ENCODE measurements at regions of chr7 and their contacts with region 1.

Region 1: GRCh38 chr7:99143853-99144672 is at the start of gene SMURF1:
- DNase-seq: peak; percentile 70
- H3K4me3 ChIP-seq: peak within 1 kb of the TSS; percentile 72 to 95 (median 80)
- H3K27ac ChIP-seq: peak within 1 kb of the TSS; percentile 79
- H3K4me1 ChIP-seq: peaks cover 19% of the 10 kb centered on the region
- H3K27me3 ChIP-seq: no peaks in the 10 kb centered on the region
- CTCF ChIP-seq: no peak
- POLR2A ChIP-seq: peak; percentile 85
- total RNA-seq, gene SMURF1: 22.3 and 22.8 TPM in 2 replicates

Region 2: GRCh38 chr7:98448766-98449165 is 695.3 kb before region 1 on chr7:
- CTCF ChIA-PET with region 1: no interaction called
- POLR2A ChIA-PET with region 1: no interaction called
- dilution Hi-C with region 1: no loop called
- intact Hi-C with region 1: no loop called
- DNase-seq: no peak
- H3K4me3 ChIP-seq: no peak overlapping the region
- H3K27ac ChIP-seq: no peak overlapping the region
- H3K4me1 ChIP-seq: no peaks in the 10 kb centered on the region
- H3K27me3 ChIP-seq: no peaks in the 10 kb centered on the region
- CTCF ChIP-seq: no peak
- POLR2A ChIP-seq: no peak

Region 3: DNA sequence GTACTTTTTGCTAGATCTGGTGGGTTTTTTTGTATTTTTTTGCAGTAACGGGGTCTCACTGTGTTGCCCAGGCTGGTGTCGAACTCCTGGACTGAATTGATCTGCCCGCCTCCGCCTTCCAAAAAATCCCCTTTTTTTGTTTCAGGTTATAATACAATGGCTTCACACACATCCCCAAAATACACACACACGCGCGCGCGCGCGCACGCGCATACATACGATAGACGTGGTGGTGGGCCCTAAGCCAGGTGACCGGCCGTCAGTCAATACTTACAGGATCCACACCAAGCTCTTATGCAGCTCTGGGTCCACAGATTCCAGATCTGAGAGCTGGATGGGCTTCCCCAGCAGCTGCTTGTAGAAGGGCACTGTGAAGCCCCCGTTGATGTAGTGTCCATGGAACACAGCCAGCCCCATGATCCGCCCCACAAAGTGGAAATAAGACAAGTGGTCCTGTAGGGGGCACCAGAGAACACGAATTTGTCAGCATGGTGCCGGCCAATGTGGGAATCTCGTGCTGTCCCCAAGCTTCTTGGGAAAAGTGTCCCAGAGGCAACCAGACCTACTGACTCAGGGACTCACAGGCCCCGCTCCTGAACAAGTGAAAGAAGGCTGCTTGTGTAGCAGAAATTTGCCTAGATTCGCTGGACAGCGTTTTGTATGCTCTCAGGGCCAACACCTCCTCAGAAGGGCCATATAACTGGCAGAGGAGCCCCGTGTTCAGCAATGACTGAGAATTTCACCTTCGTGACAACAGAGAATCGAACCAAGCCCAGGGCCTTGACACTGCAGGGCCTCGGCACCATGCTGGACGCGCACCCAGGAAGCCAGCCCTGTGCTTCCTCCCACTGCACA is 103.7 kb before region 1 on chr7:
- CTCF ChIA-PET with region 1: interaction called, 4 read pairs
- POLR2A ChIA-PET with region 1: no interaction called
- dilution Hi-C with region 1: no loop called
- intact Hi-C with region 1: loop called (anchors 1 kb)
- DNase-seq: peak; percentile 89
- H3K4me3 ChIP-seq: no peak overlapping the region
- H3K27ac ChIP-seq: peak overlapping the region; percentile 61
- H3K4me1 ChIP-seq: peaks cover 37% of the 10 kb centered on the region
- H3K27me3 ChIP-seq: no peaks in the 10 kb centered on the region
- CTCF ChIP-seq: peak; percentile 74
- POLR2A ChIP-seq: no peak

Region 4: DNA sequence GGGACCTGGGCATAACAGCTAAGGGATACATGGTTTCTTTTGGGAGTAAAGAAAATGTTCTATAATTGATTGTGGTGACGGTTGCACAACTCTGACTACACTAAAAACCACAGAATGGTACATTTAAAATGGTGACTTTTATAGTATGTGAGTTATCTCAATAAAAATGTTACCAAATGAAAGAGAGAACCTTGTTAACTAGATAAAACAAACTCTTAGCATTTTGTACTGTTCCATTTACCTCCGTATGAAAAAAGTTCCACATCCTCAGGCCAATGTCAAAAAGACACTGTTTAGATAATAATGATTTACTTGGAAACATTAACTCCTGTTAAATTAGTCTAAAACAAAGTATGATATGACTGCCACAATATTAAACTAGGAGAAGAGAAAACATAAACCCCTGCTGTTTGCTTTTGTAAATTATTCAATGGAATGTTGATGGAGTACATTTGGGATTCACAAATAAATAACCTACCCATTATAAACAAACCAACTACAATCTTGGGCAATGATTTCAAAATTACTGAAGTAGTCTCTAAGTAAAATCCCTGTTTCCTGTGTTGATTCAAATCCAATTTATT is 60.9 kb before region 1 on chr7:
- CTCF ChIA-PET with region 1: no interaction called
- POLR2A ChIA-PET with region 1: no interaction called
- dilution Hi-C with region 1: no loop called
- intact Hi-C with region 1: loop called (anchors 5 kb)
- DNase-seq: no peak
- H3K4me3 ChIP-seq: no peak overlapping the region
- H3K27ac ChIP-seq: no peak overlapping the region
- H3K4me1 ChIP-seq: peaks cover 5% of the 10 kb centered on the region
- H3K27me3 ChIP-seq: no peaks in the 10 kb centered on the region
- CTCF ChIP-seq: no peak
- POLR2A ChIP-seq: no peak

Region 5: GRCh38 chr7:99098824-99099498 is 45.1 kb before region 1 on chr7:
- CTCF ChIA-PET with region 1: no interaction called
- POLR2A ChIA-PET with region 1: no interaction called
- dilution Hi-C with region 1: no loop called
- intact Hi-C with region 1: loop called (anchors 2 kb)
- DNase-seq: no peak
- H3K4me3 ChIP-seq: no peak overlapping the region
- H3K27ac ChIP-seq: no peak overlapping the region
- H3K4me1 ChIP-seq: peaks cover 19% of the 10 kb centered on the region
- H3K27me3 ChIP-seq: no peaks in the 10 kb centered on the region
- CTCF ChIP-seq: no peak
- POLR2A ChIP-seq: no peak

Region 6: DNA sequence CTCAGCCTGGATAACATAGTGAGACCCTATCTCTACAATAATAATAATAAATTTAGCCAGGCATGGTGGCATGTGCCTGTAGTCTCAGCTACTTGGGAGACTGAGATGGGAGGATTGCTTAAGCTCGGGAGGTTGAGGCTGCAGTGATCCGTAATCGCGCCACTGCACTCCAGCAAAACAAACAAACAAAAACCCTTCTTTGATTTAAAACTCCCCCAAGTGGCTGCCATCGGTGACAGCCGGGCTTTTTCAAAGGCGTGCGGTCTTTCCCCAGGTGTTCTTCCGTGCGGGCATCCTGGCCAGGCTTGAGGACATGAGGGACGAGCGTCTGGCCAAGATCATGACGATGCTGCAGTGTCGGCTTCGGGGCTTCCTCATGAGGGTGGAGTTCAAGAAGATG is 126.6 kb after region 1 on chr7:
- CTCF ChIA-PET with region 1: interaction called, 3 read pairs
- POLR2A ChIA-PET with region 1: no interaction called
- dilution Hi-C with region 1: no loop called
- intact Hi-C with region 1: loop called (anchors 5 kb)
- DNase-seq: no peak
- H3K4me3 ChIP-seq: no peak overlapping the region
- H3K27ac ChIP-seq: no peak overlapping the region
- H3K4me1 ChIP-seq: peaks cover 31% of the 10 kb centered on the region
- H3K27me3 ChIP-seq: no peaks in the 10 kb centered on the region
- CTCF ChIP-seq: no peak
- POLR2A ChIP-seq: no peak

Region 7: DNA sequence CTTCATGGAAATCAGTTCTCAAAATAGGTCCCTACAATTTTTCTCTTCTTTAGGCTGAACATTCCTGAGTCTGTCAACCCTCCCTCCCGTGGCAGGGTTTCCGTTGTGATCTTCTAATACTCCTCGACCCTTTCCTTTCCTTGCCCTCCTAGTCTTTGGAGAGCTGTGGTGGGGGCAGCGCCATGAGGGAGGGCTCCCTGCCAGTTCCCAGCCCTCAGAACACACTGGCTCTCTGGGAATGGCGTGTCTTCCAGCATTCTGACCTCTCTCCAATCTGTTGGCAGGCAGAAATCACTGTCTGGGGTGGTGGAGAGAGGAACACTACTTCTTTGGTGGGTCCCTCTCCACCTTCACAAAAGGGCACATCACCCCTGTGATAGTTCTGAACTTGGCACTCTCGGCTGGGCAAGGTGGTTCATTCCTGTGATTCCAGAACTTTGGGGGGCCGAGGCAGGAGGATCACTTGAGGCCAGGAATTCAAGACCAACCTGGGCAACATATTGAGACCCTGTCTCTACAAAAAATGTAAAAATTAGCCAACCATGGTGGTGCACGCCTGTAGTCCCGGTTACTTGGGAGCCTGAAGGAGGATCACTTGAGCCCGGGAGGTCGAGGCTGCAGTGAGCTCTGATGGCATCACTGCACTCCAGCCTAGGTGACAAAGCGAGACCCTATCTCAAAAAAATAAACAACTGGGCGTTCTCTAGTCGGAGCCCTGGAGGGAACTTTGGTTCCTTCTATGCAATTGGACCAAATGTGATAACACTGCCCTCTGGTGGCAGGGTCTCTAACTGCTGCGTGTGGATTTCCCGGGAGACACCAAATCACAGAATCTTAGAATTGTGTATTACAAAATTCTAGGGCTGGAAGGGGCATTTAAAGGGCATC is 168.5 kb after region 1 on chr7:
- CTCF ChIA-PET with region 1: interaction called, 6 read pairs
- POLR2A ChIA-PET with region 1: no interaction called
- dilution Hi-C with region 1: no loop called
- intact Hi-C with region 1: loop called (anchors 2 kb)
- DNase-seq: peak; percentile 59
- H3K4me3 ChIP-seq: no peak overlapping the region
- H3K27ac ChIP-seq: no peak overlapping the region
- H3K4me1 ChIP-seq: no peaks in the 10 kb centered on the region
- H3K27me3 ChIP-seq: no peaks in the 10 kb centered on the region
- CTCF ChIP-seq: peak; percentile 82 to 83
- POLR2A ChIP-seq: no peak

Region 8: GRCh38 chr7:99325545-99326407 is 181.7 kb after region 1 on chr7 and contains the start of gene ARPC1A:
- CTCF ChIA-PET with region 1: no interaction called
- POLR2A ChIA-PET with region 1: no interaction called
- dilution Hi-C with region 1: no loop called
- intact Hi-C with region 1: loop called (anchors 2 kb)
- DNase-seq: peak; percentile 97
- H3K4me3 ChIP-seq: peak within 1 kb of the TSS; percentile 84 to 99 (median 94)
- H3K27ac ChIP-seq: peak within 1 kb of the TSS; percentile 76
- H3K4me1 ChIP-seq: peaks cover 42% of the 10 kb centered on the region
- H3K27me3 ChIP-seq: no peaks in the 10 kb centered on the region
- CTCF ChIP-seq: peak; percentile 15 to 41
- POLR2A ChIP-seq: peak; percentile 98
- total RNA-seq, gene ARPC1A: 243 TPM in 2 replicates

Measured in endothelial cell of umbilical vein (primary cell).